WTC11 (cell line): ENCODE measurements at regions of chr1 and their contacts with region 1.

Region 1: DNA sequence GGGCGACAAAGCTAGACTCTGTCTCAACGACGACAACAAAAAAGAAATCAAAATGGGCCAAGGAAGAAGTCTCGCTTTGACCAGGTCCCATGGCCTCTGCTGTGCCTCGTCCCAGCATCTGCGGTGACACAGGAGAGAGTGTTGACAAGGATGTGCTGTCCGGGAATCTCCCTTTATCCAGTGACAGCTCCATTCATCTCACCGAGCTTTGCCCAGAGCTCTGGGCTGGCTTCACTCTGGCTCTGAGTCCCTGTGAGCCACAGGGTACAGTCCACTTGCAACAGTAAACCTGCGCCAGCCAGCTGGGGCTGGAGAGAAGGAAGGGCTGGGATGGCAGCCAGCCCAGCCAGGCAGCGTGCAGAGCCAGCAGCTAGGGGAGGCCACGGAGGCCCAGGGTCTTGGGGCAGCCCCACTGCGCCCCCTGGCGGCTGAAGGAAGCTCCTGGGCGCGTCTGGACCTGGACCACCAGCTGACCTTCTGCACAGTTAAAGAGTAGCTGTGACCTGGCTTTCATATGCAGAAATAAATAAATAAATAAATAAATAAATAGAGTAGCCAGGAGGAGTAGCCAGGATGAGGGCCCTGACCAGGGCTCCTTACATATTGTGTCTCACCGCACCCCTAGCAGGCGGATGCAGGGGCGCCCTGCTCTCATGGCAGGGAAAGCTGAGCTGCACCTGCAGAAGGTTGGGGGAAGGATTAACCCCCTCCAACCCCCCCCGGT is 29.7 kb downstream of the ENO1 start:
- DNase-seq: peak; percentile 91
- ATAC-seq: peak; percentile 94
- H3K4me3 Mint-ChIP-seq: no peak overlapping the region
- H3K27ac Mint-ChIP-seq: no peak overlapping the region
- H3K4me1 Mint-ChIP-seq: peaks cover 10% of the 10 kb centered on the region; the same call in 1 of the 2 replicates
- H3K27me3 Mint-ChIP-seq: no peaks in the 10 kb centered on the region
- CTCF ChIP-seq: peak; percentile 97

Region 2: DNA sequence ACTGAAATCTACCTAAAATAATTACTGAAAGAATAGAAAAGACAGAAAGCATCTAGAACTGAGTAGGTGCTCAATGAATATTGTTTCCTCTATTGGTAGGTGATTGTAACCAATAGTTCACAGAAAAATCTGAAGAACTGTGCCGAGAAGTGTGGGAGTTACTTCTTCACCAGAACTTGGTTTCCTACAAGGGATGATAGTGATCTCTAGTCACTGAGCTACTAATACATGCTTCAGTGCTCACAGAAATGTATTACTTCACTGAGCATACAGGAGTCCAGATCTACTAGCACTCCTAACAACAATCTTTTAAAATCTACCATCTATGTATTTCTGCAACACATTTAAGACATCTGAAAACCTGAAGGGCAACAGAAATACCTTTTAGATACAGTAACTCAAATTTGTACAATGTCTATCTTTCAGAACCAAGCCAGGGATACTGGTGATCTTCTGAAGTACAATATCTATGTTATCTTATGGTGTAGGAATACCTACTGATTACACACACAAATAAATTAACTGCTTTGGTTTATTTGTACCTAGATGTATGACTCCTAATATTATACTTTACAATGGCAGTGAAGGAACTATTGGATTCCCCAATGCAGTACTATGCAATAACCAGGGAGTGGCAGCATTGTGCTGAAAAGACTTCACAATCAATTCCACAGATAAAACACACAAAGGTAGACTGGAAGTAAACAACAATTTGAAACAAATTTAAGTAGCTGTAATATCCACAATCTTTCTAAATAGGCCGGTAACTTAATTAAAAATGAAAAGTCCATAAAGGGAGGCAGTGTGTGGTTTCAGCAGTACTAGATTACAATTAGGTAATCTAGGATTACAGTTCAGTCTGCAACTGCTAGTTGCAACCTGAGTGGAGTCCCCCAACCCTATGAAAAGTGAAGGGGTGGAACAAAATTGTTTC is 287.9 kb before region 1 on chr1:
- CTCF ChIA-PET with region 1: interaction called, 29 read pairs
- POLR2A ChIA-PET with region 1: no interaction called
- DNase-seq: no peak
- ATAC-seq: peak; percentile 69
- H3K4me3 Mint-ChIP-seq: no peak overlapping the region
- H3K27ac Mint-ChIP-seq: peak overlapping the region; percentile 47
- H3K4me1 Mint-ChIP-seq: peaks cover 37% of the 10 kb centered on the region
- H3K27me3 Mint-ChIP-seq: no peaks in the 10 kb centered on the region
- CTCF ChIP-seq: peak; percentile 36

Region 3: GRCh38 chr1:8727809-8728213 is 121.0 kb before region 1 on chr1:
- CTCF ChIA-PET with region 1: interaction called, 27 read pairs
- POLR2A ChIA-PET with region 1: no interaction called
- DNase-seq: no peak
- ATAC-seq: no peak
- H3K4me3 Mint-ChIP-seq: no peak overlapping the region
- H3K27ac Mint-ChIP-seq: peak overlapping the region; percentile 63; the same call in 1 of the 2 replicates
- H3K4me1 Mint-ChIP-seq: peaks cover 39% of the 10 kb centered on the region
- H3K27me3 Mint-ChIP-seq: no peaks in the 10 kb centered on the region
- CTCF ChIP-seq: no peak

Region 4: GRCh38 chr1:8763888-8764287 is 84.9 kb before region 1 on chr1:
- CTCF ChIA-PET with region 1: interaction called, 11 read pairs
- POLR2A ChIA-PET with region 1: no interaction called
- DNase-seq: no peak
- ATAC-seq: peak; percentile 81
- H3K4me3 Mint-ChIP-seq: no peak overlapping the region
- H3K27ac Mint-ChIP-seq: peak overlapping the region; percentile 60
- H3K4me1 Mint-ChIP-seq: peaks cover 23% of the 10 kb centered on the region
- H3K27me3 Mint-ChIP-seq: no peaks in the 10 kb centered on the region
- CTCF ChIP-seq: no peak

Region 5: DNA sequence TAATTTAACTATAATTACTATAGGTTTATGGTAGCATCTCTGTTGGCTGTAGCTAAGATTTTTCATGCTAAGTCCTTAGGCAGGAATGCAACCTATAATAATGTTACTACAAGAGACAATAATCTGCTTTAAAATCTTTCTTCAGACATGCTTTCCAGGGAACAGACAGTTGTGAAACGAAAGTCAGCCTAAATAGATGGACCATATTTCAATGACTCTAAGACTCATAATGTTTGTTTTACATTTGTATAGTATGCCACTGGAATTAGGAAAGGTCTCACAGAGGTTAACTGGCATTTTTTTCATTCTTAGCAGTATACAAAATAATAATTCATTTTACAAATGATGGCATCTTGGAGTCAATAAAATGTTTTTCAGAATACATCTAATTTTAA is 39.5 kb before region 1 on chr1:
- CTCF ChIA-PET with region 1: interaction called, 50 read pairs
- POLR2A ChIA-PET with region 1: no interaction called
- DNase-seq: no peak
- ATAC-seq: no peak
- H3K4me3 Mint-ChIP-seq: no peak overlapping the region
- H3K27ac Mint-ChIP-seq: no peak overlapping the region
- H3K4me1 Mint-ChIP-seq: peaks cover 42% of the 10 kb centered on the region
- H3K27me3 Mint-ChIP-seq: no peaks in the 10 kb centered on the region
- CTCF ChIP-seq: no peak

Region 6: DNA sequence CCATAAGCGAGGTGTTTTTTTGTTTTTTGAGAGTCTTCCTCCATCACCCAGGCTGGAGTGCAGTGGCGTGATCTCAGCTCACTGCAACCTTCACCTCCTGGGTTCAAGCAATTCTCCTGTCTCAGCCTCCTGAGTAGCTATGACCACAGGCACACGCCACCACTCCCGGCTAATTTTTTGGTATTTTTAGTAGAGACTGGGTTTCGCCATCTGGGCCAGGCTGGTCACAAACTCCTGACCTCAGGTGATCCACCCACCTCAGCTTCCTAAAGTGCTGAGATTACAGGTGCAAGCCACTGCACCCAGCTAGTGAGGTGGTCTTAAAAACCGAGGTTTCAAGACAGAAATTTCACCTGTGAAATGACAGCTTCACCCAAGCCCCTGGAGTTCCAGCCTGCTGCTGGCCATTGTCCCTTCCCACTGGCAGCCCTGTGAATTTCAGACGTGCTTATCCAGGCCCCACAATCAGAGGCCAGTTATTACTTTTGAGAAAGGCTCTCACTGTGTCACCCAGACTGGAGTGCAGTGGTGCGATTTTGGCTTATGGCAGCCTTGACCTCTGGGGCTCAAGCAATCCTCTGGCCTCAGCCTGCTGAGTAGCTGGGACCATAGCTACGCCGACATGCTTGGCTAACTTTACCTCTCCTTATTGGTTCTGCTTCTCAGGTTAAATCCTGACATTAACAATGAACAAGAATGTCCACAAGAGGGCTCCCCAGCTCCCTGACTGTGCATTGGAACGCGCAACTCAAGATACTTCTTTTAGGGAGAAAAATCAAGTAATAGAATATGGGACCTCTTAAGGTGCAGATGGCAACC is 10.3 kb after region 1 on chr1:
- CTCF ChIA-PET with region 1: interaction called, 77 read pairs
- POLR2A ChIA-PET with region 1: no interaction called
- DNase-seq: peak; percentile 47
- ATAC-seq: peak; percentile 14
- H3K4me3 Mint-ChIP-seq: no peak overlapping the region
- H3K27ac Mint-ChIP-seq: peak overlapping the region; percentile 94
- H3K4me1 Mint-ChIP-seq: peaks cover 27% of the 10 kb centered on the region
- H3K27me3 Mint-ChIP-seq: no peaks in the 10 kb centered on the region; the same call in 1 of the 2 replicates
- CTCF ChIP-seq: peak; percentile 30; the same call in 1 of the 2 replicates

Region 7: DNA sequence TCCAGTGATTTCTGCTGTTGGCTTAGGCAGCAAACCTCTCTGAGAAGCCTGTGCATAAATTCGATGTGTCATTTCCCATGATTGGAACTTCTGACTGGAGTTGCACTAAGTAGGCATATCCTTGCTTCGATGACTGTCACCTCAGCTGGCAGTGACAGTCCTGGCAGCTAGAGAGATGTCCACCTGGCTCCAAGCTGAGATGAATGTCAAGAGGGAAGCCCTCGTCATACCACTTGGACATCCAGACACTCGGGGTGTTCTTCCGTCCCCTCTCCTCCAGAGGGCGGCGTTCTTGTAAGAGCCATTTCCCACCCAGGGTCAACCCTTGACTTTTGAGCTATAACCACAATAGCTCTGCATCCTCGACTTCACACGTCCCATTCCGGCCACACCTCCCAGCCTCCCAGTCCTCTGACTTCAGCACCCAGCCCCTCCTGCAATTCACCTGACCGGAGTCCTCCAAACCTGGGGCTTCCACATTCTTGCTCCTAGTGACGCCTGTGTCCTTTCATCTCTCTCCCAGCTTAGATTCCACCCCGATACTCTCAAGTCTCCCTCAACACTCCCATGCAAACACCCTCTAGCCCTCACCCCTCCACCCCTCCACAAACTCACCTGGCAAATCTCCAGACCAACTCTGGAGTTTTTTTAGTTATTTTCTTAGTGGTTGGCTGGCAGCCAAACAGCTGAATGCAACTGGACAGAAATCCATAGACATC is 114.1 kb after region 1 on chr1:
- CTCF ChIA-PET with region 1: interaction called, 10 read pairs
- POLR2A ChIA-PET with region 1: no interaction called
- DNase-seq: peak; percentile 80
- ATAC-seq: peak; percentile 98
- H3K4me3 Mint-ChIP-seq: no peak overlapping the region
- H3K27ac Mint-ChIP-seq: no peak overlapping the region
- H3K4me1 Mint-ChIP-seq: peaks cover 5% of the 10 kb centered on the region
- H3K27me3 Mint-ChIP-seq: no peaks in the 10 kb centered on the region; the same call in 1 of the 2 replicates
- CTCF ChIP-seq: peak; percentile 55; the same call in 1 of the 2 replicates

Region 8: GRCh38 chr1:9150582-9151327 is 301.9 kb after region 1 on chr1:
- CTCF ChIA-PET with region 1: no interaction called
- POLR2A ChIA-PET with region 1: no interaction called
- DNase-seq: no peak
- ATAC-seq: no peak
- H3K4me3 Mint-ChIP-seq: no peak overlapping the region
- H3K27ac Mint-ChIP-seq: no peak overlapping the region
- H3K4me1 Mint-ChIP-seq: peaks cover 7% of the 10 kb centered on the region; the same call in 1 of the 2 replicates
- H3K27me3 Mint-ChIP-seq: no peaks in the 10 kb centered on the region
- CTCF ChIP-seq: no peak